Mammary epithelial cell (primary cell): ENCODE measurements at regions of chr3 and their contacts with region 1.

Region 1: GRCh38 chr3:14921078-14921616 is 26.2 kb upstream of the NR2C2 start:
- DNase-seq: peak; percentile 69
- H3K4me3 ChIP-seq: no peak overlapping the region
- H3K27ac ChIP-seq: no peak overlapping the region
- H3K4me1 ChIP-seq: peaks cover 5% of the 10 kb centered on the region
- H3K27me3 ChIP-seq: peaks cover 4% of the 10 kb centered on the region
- CTCF ChIP-seq: peak; percentile 85 to 99

Region 2: GRCh38 chr3:13657660-13658435 is 1263.3 kb before region 1 on chr3:
- CTCF ChIA-PET with region 1: no interaction called
- dilution Hi-C with region 1: no loop called
- in situ Hi-C with region 1: no loop called
- intact Hi-C with region 1: loop called (anchors 5 kb)
- DNase-seq: peak; percentile 37
- H3K4me3 ChIP-seq: no peak overlapping the region
- H3K27ac ChIP-seq: no peak overlapping the region
- H3K4me1 ChIP-seq: peaks cover 11% of the 10 kb centered on the region
- H3K27me3 ChIP-seq: no peaks in the 10 kb centered on the region
- CTCF ChIP-seq: peak; percentile 85 to 98

Region 3: GRCh38 chr3:14261229-14261628 is 659.9 kb before region 1 on chr3:
- CTCF ChIA-PET with region 1: no interaction called
- dilution Hi-C with region 1: no loop called
- in situ Hi-C with region 1: no loop called
- intact Hi-C with region 1: loop called (anchors 5 kb)
- DNase-seq: peak; percentile 46
- H3K4me3 ChIP-seq: no peak overlapping the region
- H3K27ac ChIP-seq: no peak overlapping the region
- H3K4me1 ChIP-seq: peaks cover 7% of the 10 kb centered on the region
- H3K27me3 ChIP-seq: no peaks in the 10 kb centered on the region
- CTCF ChIP-seq: peak; percentile 98

Region 4: GRCh38 chr3:14548321-14548729 is 372.8 kb before region 1 on chr3:
- CTCF ChIA-PET with region 1: no interaction called
- dilution Hi-C with region 1: no loop called
- in situ Hi-C with region 1: no loop called
- intact Hi-C with region 1: no loop called
- DNase-seq: peak; percentile 20
- H3K4me3 ChIP-seq: no peak overlapping the region
- H3K27ac ChIP-seq: no peak overlapping the region
- H3K4me1 ChIP-seq: peaks cover 9% of the 10 kb centered on the region
- H3K27me3 ChIP-seq: peaks cover under 1% of the 10 kb centered on the region
- CTCF ChIP-seq: peak; percentile 58 to 73

Region 5: DNA sequence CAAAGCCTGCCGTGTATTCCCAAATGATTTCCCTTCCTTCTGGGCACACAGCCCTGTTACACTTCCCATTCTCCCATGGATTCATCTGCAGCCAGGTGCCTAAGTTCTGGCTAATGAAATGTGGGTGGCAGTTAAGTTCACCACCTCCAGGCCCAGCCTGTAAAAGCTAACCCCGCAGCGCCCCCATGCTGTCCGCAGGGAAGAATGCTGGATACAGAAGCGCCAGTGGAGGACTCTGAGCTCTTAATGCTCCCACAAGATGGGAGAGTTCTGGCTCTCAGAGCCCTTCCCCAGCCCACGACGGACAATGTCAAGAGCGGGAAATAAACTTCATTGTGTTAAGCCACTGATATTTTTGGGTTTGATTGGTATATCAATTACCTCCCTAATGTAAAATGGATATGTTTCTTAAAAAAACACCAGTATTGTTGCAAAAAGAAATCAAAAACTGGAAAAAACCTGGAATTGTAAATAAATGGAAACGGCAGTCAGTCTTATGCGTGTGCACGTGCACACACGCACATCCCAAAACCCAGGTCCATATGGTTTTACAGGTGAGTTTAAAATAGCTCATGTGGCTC is 140.1 kb before region 1 on chr3:
- CTCF ChIA-PET with region 1: no interaction called
- dilution Hi-C with region 1: loop called (anchors 5 kb)
- in situ Hi-C with region 1: loop called in 1 of 2 experiments (anchors 25 kb)
- intact Hi-C with region 1: no loop called
- DNase-seq: peak; percentile 39
- H3K4me3 ChIP-seq: no peak overlapping the region
- H3K27ac ChIP-seq: no peak overlapping the region
- H3K4me1 ChIP-seq: no peaks in the 10 kb centered on the region
- H3K27me3 ChIP-seq: no peaks in the 10 kb centered on the region
- CTCF ChIP-seq: peak; percentile 43 to 65

Region 6: DNA sequence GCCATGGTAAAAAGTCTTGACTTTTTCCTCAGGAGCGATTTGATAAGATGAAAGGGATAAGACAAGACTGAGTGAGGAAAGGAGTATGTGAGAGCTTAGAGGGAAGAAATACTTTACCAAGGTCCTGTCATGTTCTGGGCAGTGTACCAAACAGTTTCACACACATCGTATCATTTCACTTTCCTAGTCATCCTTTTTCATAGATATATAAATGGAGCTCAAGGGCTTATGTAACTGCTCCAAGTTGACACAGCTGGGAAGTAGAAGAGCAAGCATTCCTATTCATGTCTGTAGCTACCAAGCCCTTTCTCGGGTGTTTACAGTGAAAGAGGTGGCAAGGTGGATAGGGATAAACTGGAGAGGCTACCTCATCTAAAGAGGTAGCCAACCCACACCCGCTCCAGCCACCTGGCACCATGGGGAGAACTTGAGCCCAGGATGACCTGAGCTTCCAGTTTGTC is 86.6 kb after region 1 on chr3:
- CTCF ChIA-PET with region 1: no interaction called
- dilution Hi-C with region 1: no loop called
- in situ Hi-C with region 1: no loop called
- intact Hi-C with region 1: loop called (anchors 2 kb)
- DNase-seq: peak; percentile 9
- H3K4me3 ChIP-seq: no peak overlapping the region
- H3K27ac ChIP-seq: no peak overlapping the region
- H3K4me1 ChIP-seq: peaks cover 16% of the 10 kb centered on the region
- H3K27me3 ChIP-seq: no peaks in the 10 kb centered on the region
- CTCF ChIP-seq: no peak

Region 7: DNA sequence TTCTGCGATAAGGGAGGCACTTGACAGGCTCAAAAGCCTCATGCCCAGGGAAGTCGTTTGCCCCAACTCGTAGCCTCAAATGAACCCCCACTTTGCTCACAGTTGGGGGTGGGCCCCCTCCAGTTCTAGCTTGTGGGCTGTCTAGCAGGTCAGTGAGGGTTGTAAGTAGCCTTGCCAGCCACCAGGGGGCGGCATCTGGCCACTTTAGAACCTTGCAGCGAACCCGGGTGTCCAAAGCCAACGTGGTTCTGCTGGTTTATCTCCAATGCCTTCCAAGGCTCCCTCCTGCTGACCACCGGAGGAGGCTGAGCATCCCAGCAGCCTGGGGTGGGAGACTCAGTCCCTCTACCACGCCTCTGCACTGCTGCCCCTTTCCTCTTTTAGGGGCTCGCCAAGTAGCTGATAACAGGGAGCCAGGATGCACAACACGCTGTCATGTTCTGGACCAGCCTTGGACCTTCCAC is 187.0 kb after region 1 on chr3:
- CTCF ChIA-PET with region 1: no interaction called
- dilution Hi-C with region 1: no loop called
- in situ Hi-C with region 1: no loop called
- intact Hi-C with region 1: loop called (anchors 2 kb)
- DNase-seq: peak; percentile 35
- H3K4me3 ChIP-seq: no peak overlapping the region
- H3K27ac ChIP-seq: no peak overlapping the region
- H3K4me1 ChIP-seq: no peaks in the 10 kb centered on the region
- H3K27me3 ChIP-seq: no peaks in the 10 kb centered on the region
- CTCF ChIP-seq: peak; percentile 78 to 95